ENCODE measurements at regions of chr1 and their contacts with region 1.

Region 1: DNA sequence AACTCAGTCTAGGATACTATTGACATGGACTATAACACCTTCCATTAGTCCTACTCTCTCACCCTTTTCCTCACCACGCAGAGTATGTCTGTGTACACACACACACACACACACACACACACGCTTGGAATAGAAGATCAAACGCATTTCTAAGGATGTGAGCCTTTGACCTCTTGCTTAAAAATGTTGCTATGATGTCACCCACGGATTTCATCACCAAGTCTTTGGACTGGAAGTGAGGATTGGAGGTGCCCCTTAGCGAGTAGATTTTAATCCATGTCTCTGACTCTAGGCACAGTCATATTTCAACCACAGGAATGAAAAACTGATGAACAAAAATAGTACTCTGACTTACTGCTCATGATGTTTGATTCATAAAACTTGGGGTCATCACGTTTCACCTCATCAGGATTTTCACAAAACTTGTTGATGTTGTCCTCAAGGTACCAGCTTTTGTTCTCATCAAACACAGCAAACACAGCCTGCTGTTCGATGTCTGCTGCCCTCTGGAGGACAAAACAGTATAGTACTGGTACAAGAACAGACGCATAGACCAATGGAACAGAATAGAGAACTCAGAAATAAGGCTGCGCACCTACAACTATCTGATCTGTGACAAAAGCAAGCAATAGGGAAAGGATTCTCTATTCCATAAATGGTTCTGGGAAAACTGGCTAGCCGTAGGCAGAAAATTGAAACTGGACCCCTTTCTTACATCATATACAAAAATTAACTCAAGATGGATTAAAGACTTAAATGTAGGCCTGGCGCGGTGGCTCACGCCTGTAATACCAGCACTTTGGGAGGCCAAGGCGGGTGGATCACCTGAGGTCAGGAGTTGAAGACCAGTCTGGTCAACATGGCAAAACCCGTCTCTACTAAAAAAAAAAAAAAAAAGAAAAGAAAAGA is 39.9 kb downstream of the F5 start:
- DNase-seq: peak; percentile 58
- H3K4me3 Mint-ChIP-seq: no peak overlapping the region
- H3K27ac Mint-ChIP-seq: no peak overlapping the region
- H3K4me1 Mint-ChIP-seq: peaks cover 10% of the 10 kb centered on the region
- H3K27me3 Mint-ChIP-seq: no peaks in the 10 kb centered on the region

Region 2: DNA sequence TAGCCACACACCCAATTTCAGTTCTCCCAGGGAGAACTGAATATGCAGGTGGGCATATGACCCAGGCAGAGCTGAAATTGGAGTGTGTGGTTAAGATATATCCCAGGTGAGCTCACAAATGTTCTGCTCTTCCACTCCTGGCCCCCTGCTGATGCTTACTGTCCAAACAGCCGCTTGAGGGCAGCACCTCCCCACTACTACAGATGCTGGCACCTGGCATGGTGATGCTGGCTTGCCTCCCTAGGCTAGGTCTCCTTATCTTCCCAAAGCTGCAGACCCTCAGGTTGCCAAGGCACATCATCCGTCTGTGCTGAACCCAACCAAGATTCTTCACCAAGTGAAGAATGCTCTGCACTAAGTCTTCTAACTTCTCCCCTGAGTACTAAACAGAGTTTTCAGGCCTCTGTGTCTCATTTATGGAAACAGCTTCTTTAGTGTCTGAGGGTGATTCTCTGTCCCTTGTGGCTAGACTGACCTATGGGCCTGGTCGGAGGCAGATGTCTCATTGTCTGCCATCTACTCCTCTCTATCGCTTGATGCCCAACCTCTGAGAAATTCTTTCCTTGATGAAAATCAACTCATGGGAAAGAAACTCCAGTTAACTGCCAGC is 942.7 kb before region 1 on chr1:
- CTCF ChIA-PET with region 1: interaction called, 18 read pairs
- POLR2A ChIA-PET with region 1: no interaction called
- DNase-seq: peak; percentile 76
- H3K4me3 Mint-ChIP-seq: no peak overlapping the region
- H3K27ac Mint-ChIP-seq: no peak overlapping the region
- H3K4me1 Mint-ChIP-seq: no peaks in the 10 kb centered on the region
- H3K27me3 Mint-ChIP-seq: peaks cover 6% of the 10 kb centered on the region

Region 3: GRCh38 chr1:169295425-169295824 is 250.9 kb before region 1 on chr1:
- CTCF ChIA-PET with region 1: no interaction called
- POLR2A ChIA-PET with region 1: no interaction called
- DNase-seq: no peak
- H3K4me3 Mint-ChIP-seq: no peak overlapping the region
- H3K27ac Mint-ChIP-seq: no peak overlapping the region
- H3K4me1 Mint-ChIP-seq: peaks cover 3% of the 10 kb centered on the region
- H3K27me3 Mint-ChIP-seq: no peaks in the 10 kb centered on the region

Region 4: GRCh38 chr1:169340882-169341281 is 205.5 kb before region 1 on chr1:
- CTCF ChIA-PET with region 1: no interaction called
- POLR2A ChIA-PET with region 1: no interaction called
- DNase-seq: no peak
- H3K4me3 Mint-ChIP-seq: no peak overlapping the region
- H3K27ac Mint-ChIP-seq: no peak overlapping the region
- H3K4me1 Mint-ChIP-seq: peaks cover 10% of the 10 kb centered on the region
- H3K27me3 Mint-ChIP-seq: no peaks in the 10 kb centered on the region

Region 5: DNA sequence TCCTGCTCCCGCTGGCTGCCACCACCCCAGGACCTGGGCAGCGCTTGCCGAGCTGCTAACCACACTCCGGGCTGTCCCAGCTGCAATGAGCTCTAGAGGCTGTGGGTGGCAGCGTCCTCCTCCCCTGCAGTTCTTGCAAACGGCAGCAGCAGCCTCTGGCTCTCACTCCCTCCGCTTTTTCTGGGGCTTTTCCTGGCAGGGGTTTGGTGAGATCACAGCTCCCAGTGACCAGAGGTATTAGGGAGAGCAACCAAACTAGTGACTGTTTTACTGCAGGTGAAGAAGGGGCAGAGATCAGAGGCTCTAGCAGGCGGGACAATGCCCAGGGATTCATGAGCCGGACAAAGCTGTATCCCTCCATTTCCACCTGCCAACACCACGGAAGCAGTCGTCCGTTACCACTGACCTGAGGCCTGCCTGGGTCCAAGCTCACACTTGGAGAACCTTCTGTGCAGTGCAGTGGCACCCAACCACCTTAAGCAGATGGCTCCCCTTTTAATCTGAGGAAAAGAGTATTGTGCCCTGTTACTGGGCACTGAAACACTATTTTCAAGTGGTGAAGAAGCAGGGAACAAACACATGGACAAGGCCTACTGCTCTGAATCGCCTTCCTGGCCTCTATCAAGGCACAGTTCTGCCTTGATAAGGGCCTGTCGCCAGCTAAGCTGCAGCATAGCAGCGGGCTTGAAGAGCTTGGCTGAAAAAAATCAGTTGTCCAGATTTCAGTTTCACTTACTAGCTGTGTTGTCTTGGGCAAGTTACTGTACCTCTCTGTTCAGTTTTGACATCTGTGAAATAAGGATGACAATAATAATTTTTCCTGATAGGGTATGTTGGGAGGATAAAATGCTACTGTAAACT is 40.3 kb after region 1 on chr1 and contains the start of gene F5:
- CTCF ChIA-PET with region 1: interaction called, 25 read pairs
- POLR2A ChIA-PET with region 1: no interaction called
- DNase-seq: peak; percentile 85
- H3K4me3 Mint-ChIP-seq: peak within 1 kb of the TSS; percentile 87
- H3K27ac Mint-ChIP-seq: peak within 1 kb of the TSS; percentile 77
- H3K4me1 Mint-ChIP-seq: peaks cover 68% of the 10 kb centered on the region
- H3K27me3 Mint-ChIP-seq: no peaks in the 10 kb centered on the region
- total RNA-seq, gene F5: 8.9 to 11.0 TPM

Region 6: DNA sequence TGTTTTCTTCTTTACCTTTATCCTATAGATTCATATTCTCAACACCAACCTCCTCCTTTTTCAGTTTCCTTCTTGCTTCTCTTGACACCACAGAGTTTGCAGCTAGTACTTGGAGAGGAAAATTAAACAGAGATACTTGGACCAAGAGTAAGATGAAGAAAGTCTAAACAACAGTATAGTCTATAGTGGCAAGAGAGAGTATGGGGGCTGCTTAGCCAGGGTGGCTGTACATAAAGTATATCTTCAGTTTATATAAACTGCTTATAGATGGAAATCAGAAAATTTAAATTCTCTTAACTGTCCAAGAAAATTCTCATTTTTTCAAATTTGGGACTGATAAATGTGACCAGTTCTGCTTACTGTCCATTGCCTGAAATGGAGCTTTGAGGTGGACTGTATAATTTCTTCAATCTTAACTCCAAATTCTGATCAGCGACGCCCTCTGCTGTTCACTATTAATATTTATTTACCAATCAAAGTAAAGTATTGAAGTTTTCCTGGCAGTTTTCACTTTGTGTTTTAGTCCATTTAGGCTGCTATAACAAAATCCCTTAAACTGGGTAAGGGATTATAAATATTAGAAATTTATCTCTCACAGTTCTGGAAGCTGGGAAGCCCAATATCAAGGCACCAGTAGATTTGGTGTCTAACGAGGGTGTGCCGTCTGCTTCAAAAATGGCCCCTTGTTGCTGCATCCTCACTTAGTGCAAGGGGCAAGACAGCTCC is 263.2 kb after region 1 on chr1:
- CTCF ChIA-PET with region 1: interaction called, 21 read pairs
- POLR2A ChIA-PET with region 1: no interaction called
- DNase-seq: no peak
- H3K4me3 Mint-ChIP-seq: no peak overlapping the region
- H3K27ac Mint-ChIP-seq: no peak overlapping the region
- H3K4me1 Mint-ChIP-seq: peaks cover 8% of the 10 kb centered on the region
- H3K27me3 Mint-ChIP-seq: no peaks in the 10 kb centered on the region

Measured in activated CD4-positive, alpha-beta memory T cell treated with anti-CD3 and anti-CD28 coated beads, Interleukin-2, amount 10 ng/mL, durations not matched to agents 7 days and 5 days (primary cell).